Activated CD8-positive, alpha-beta T cell treated with anti-CD3 and anti-CD28 coated beads for 36 hours (primary cell): ENCODE measurements at regions of chr9 and their contacts with region 1.

Region 1: GRCh38 chr9:123225374-123225813 is 43.0 kb downstream of the STRBP start:
- DNase-seq: peak; percentile 81
- ATAC-seq: peak; percentile 98
- H3K4me3 Mint-ChIP-seq: peak overlapping the region; percentile 21
- H3K27ac Mint-ChIP-seq: peak overlapping the region; percentile 77
- H3K4me1 Mint-ChIP-seq: peaks cover 41% of the 10 kb centered on the region
- H3K27me3 Mint-ChIP-seq: no peaks in the 10 kb centered on the region
- CTCF ChIP-seq: peak; percentile 54

Region 2: DNA sequence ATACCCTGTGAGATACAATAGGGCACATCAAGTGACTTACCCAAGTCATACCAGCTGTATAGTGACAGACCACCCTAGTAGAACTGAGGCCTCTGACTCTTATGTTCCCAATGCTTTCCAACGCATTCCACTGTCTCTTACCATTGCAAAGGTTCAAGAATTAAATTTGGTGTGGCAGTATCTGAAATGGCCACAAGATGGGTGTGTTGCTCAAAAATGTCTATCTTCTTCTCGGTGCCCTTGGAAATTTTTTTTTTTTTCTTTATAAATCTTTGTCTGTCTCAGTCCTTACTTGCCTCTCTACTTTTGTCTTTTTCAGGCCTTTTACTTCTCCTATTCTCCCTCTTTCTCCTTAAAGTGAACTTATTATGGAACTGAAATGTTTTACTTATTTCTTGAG is 143.6 kb before region 1 on chr9:
- CTCF ChIA-PET with region 1: interaction called, 9 read pairs
- POLR2A ChIA-PET with region 1: no interaction called
- intact Hi-C with region 1: loop called (anchors 10 kb)
- DNase-seq: peak; percentile 18
- ATAC-seq: peak; percentile 39
- H3K4me3 Mint-ChIP-seq: no peak overlapping the region
- H3K27ac Mint-ChIP-seq: no peak overlapping the region
- H3K4me1 Mint-ChIP-seq: no peaks in the 10 kb centered on the region
- H3K27me3 Mint-ChIP-seq: no peaks in the 10 kb centered on the region
- CTCF ChIP-seq: peak; percentile 60

Region 3: DNA sequence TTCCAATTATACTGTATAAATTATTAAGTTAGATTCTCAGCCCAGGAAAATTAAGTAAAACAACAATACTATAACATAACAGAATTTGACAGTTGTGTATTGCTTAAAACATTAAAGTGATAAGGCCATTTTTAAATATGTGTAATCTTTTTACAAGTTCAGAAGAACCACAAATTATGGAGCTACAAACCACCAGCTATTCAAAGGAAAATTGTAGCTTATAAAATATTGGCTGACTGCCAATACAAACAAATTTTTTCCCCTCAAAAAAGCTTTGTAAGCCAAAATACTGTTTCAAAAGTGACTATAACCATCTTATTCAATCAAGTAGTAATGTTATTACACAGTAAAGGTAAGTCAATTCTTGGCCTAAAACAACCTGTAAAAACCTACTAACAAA is 21.1 kb after region 1 on chr9:
- CTCF ChIA-PET with region 1: interaction called, 10 read pairs
- POLR2A ChIA-PET with region 1: interaction called, 3 read pairs
- intact Hi-C with region 1: no loop called
- DNase-seq: no peak
- ATAC-seq: no peak
- H3K4me3 Mint-ChIP-seq: no peak overlapping the region
- H3K27ac Mint-ChIP-seq: no peak overlapping the region
- H3K4me1 Mint-ChIP-seq: peaks cover 50% of the 10 kb centered on the region
- H3K27me3 Mint-ChIP-seq: no peaks in the 10 kb centered on the region
- CTCF ChIP-seq: no peak

Region 4: GRCh38 chr9:123338710-123339665 is 113.6 kb after region 1 on chr9:
- CTCF ChIA-PET with region 1: interaction called, 3 read pairs
- POLR2A ChIA-PET with region 1: interaction called, 3 read pairs
- intact Hi-C with region 1: loop called (anchors 2 kb)
- DNase-seq: peak; percentile 94
- ATAC-seq: peak; percentile 75
- H3K4me3 Mint-ChIP-seq: peak overlapping the region; percentile 74
- H3K27ac Mint-ChIP-seq: peak overlapping the region; percentile 99
- H3K4me1 Mint-ChIP-seq: peaks cover 46% of the 10 kb centered on the region
- H3K27me3 Mint-ChIP-seq: no peaks in the 10 kb centered on the region
- CTCF ChIP-seq: no peak

Region 5: GRCh38 chr9:123360161-123361085 is 135.0 kb after region 1 on chr9:
- CTCF ChIA-PET with region 1: no interaction called
- POLR2A ChIA-PET with region 1: no interaction called
- intact Hi-C with region 1: no loop called
- DNase-seq: peak; percentile 80
- ATAC-seq: peak; percentile 82
- H3K4me3 Mint-ChIP-seq: no peak overlapping the region
- H3K27ac Mint-ChIP-seq: no peak overlapping the region
- H3K4me1 Mint-ChIP-seq: peaks cover 13% of the 10 kb centered on the region
- H3K27me3 Mint-ChIP-seq: peaks cover 6% of the 10 kb centered on the region
- CTCF ChIP-seq: no peak

Region 6: DNA sequence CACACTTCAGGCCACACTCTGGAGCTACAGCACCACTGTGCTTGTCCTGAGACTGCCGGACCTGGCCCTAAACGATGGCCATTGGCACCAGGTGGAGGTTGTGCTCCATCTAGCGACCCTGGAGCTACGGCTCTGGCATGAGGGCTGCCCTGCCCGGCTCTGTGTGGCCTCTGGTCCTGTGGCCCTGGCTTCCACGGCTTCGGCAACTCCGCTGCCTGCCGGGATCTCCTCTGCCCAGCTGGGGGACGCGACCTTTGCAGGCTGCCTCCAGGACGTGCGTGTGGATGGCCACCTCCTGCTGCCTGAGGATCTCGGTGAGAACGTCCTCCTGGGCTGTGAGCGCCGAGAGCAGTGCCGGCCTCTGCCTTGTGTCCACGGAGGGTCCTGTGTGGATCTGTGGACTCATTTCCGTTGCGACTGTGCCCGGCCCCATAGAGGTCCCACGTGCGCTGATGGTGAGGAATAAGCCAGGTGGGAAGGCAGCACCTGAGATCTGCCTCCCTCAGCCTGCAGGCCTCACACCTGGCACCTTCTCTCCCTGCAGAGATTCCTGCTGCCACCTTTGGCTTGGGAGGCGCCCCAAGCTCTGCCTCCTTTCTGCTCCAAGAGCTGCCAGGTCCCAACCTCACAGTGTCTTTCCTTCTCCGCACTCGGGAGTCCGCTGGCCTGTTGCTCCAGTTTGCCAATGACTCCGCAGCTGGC is 145.3 kb after region 1 on chr9:
- CTCF ChIA-PET with region 1: no interaction called
- POLR2A ChIA-PET with region 1: no interaction called
- intact Hi-C with region 1: no loop called
- DNase-seq: no peak
- ATAC-seq: no peak
- H3K4me3 Mint-ChIP-seq: no peak overlapping the region
- H3K27ac Mint-ChIP-seq: no peak overlapping the region
- H3K4me1 Mint-ChIP-seq: no peaks in the 10 kb centered on the region
- H3K27me3 Mint-ChIP-seq: peaks cover 44% of the 10 kb centered on the region
- CTCF ChIP-seq: no peak